Heart left ventricle (tissue), 16 donors: ENCODE measurements at regions of chr1 and their contacts with region 1.

Region 1: DNA sequence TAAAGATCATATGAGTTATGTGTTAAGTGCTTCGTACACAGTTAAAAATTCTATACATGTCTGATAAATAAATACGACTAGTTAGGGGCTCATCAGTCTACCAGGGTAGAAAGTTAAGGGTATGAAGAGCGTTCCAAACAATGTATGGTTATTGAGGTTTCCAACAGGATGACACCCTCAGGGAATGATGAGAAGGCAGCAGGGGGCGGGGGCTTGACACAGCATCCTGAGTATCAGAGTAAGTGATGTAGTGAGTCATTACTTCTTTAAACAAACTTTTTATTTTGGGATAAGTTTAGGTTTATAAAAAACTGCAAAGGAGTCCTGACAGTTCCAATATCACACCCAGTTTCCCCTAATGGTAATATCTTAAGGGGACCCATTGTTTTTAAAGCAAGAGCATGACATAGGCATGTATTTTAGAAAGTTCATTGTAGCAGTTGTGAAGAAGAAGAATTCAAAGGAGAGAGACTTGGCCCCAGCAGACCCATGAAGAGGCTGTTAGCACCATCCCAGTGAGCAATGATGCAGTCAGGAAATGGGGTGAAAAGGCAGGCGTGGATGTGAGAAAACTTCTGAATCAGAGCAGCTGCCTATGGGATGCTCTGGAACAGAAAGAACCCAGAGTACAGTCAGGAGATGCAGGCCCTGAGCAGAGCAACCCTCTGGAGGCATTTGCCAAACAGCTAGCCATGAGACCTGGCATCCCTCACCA is 15.0 kb upstream of the PSMB2 start:
- DNase-seq: no peak
- ATAC-seq: no peak
- H3K4me3 ChIP-seq: no peak overlapping the region
- H3K27ac ChIP-seq: no peak overlapping the region
- H3K4me1 ChIP-seq: no peaks in the 10 kb centered on the region
- H3K27me3 ChIP-seq: peaks cover 0 to 11% (median 0%) of the 10 kb centered on the region in 9 donors
- CTCF ChIP-seq: no peak
- POLR2A ChIP-seq: no peak

Region 2: DNA sequence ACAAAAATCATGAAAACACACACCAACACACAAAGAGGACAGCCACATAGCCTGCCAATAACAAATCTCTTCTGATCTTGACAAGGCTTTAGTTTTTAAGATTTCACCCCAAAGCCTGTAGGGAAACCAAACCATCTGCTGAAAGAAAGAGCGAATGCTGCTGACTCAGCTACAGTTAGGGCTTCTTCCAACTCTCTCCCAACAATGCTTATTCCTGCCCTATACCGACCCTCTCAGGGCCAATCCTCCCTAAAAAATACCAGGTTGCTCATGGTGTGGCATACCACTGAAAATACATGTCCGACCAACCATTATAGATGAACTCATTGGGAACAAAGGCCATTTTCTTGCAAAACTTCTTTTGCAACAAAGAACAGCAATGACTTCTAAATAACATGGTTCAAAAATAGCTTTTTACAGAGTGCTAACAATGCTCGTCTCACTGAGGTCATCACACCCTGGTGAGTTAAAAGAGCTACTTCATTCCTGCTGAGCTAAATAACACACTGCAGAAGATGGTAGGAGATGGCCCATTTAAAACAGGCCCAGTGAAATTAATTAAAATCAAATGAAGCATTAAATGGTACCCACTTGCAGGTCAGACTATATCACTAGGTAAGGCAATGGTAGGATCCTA is 185.2 kb before region 1 on chr1:
- intact Hi-C with region 1: no loop called
- DNase-seq: no peak
- ATAC-seq: peak in 2 of 4 donors; percentile 56 to 59
- H3K4me3 ChIP-seq: no peak overlapping the region
- H3K27ac ChIP-seq: peak overlapping the region in 1 of 12 donors; percentile 2
- H3K4me1 ChIP-seq: peaks cover 0 to 17% (median 0%) of the 10 kb centered on the region in 12 donors
- H3K27me3 ChIP-seq: no peaks in the 10 kb centered on the region
- CTCF ChIP-seq: no peak
- POLR2A ChIP-seq: no peak

Region 3: GRCh38 chr1:35557292-35558063 is 98.8 kb before region 1 on chr1 and contains the starts of genes KIAA0319L and NCDN:
- intact Hi-C with region 1: no loop called
- DNase-seq: peak; percentile 97 to 98 (median 98)
- ATAC-seq: peak; percentile 94 to 97 (median 96)
- H3K4me3 ChIP-seq: peak within 1 kb of the TSS; percentile 69 to 98 (median 92)
- H3K27ac ChIP-seq: peak within 1 kb of the TSS; percentile 90 to 99 (median 98)
- H3K4me1 ChIP-seq: peaks cover 0 to 75% (median 49%) of the 10 kb centered on the region in 12 donors
- H3K27me3 ChIP-seq: no peaks in the 10 kb centered on the region
- CTCF ChIP-seq: no peak
- POLR2A ChIP-seq: peak in 1 of 2 donors; percentile 65
- total RNA-seq, gene KIAA0319L: 58.3 to 108 (median 78.3) TPM
- total RNA-seq, gene NCDN: 20.7 to 44.4 (median 35.3) TPM

Region 4: GRCh38 chr1:35756064-35756463 is 99.8 kb after region 1 on chr1:
- intact Hi-C with region 1: loop called in 1 of 10 experiments (anchors 5 kb)
- DNase-seq: no peak
- ATAC-seq: no peak
- H3K4me3 ChIP-seq: no peak overlapping the region
- H3K27ac ChIP-seq: no peak overlapping the region
- H3K4me1 ChIP-seq: no peaks in the 10 kb centered on the region
- H3K27me3 ChIP-seq: no peaks in the 10 kb centered on the region
- CTCF ChIP-seq: no peak
- POLR2A ChIP-seq: no peak